CD4-positive, alpha-beta memory T cell (primary cell): ENCODE measurements at regions of chr17 and their contacts with region 1.

Region 1: GRCh38 chr17:82892899-82893565 is 53.2 kb upstream of the ZNF750 start:
- DNase-seq: peak; percentile 74 to 91 (median 78)
- H3K4me3 ChIP-seq: no peak overlapping the region
- H3K4me3 Mint-ChIP-seq: peak overlapping the region in 7 of 8 donors; percentile 7 to 82 (median 72)
- H3K27ac ChIP-seq: peak overlapping the region; percentile 17
- H3K27ac Mint-ChIP-seq: peak overlapping the region; percentile 88 to 99 (median 95)
- H3K4me1 ChIP-seq: peaks cover 25% of the 10 kb centered on the region
- H3K4me1 Mint-ChIP-seq: peaks cover 13 to 45% (median 29%) of the 10 kb centered on the region in 4 donors
- H3K27me3 ChIP-seq: no peaks in the 10 kb centered on the region
- H3K27me3 Mint-ChIP-seq: no peaks in the 10 kb centered on the region

Region 2: GRCh38 chr17:82882715-82883418 is 10.2 kb before region 1 on chr17:
- CTCF ChIA-PET with region 1: no interaction called
- POLR2A ChIA-PET with region 1: interaction called, 8 read pairs
- intact Hi-C with region 1: loop called (anchors 1 kb)
- DNase-seq: peak; percentile 82 to 93 (median 84)
- H3K4me3 ChIP-seq: peak overlapping the region in 1 of 2 donors; percentile 51
- H3K4me3 Mint-ChIP-seq: peak overlapping the region; percentile 80 to 95 (median 92)
- H3K27ac ChIP-seq: peak overlapping the region; percentile 67
- H3K27ac Mint-ChIP-seq: peak overlapping the region; percentile 98 to 100 (median 99)
- H3K4me1 ChIP-seq: peaks cover 56% of the 10 kb centered on the region
- H3K4me1 Mint-ChIP-seq: peaks cover 57 to 94% (median 78%) of the 10 kb centered on the region in 4 donors
- H3K27me3 ChIP-seq: no peaks in the 10 kb centered on the region
- H3K27me3 Mint-ChIP-seq: no peaks in the 10 kb centered on the region